Activated CD4-positive, alpha-beta T cell treated with anti-CD3 and anti-CD28 coated beads for 36 hours (primary cell): ENCODE measurements at regions of chr2 and their contacts with region 1.

Region 1: GRCh38 chr2:136384531-136385303 is 266.8 kb upstream of the CXCR4 start:
- DNase-seq: peak; percentile 68
- ATAC-seq: peak; percentile 40
- H3K4me3 Mint-ChIP-seq: no peak overlapping the region
- H3K27ac Mint-ChIP-seq: peak overlapping the region; percentile 67
- H3K4me1 Mint-ChIP-seq: peaks cover 42% of the 10 kb centered on the region
- H3K27me3 Mint-ChIP-seq: no peaks in the 10 kb centered on the region

Region 2: GRCh38 chr2:135531231-135532228 is 853.2 kb before region 1 on chr2 and contains the start of gene R3HDM1:
- CTCF ChIA-PET with region 1: no interaction called
- POLR2A ChIA-PET with region 1: no interaction called
- intact Hi-C with region 1: loop called in 1 of 2 experiments (anchors 2 kb)
- DNase-seq: peak; percentile 96
- ATAC-seq: peak; percentile 88
- H3K4me3 Mint-ChIP-seq: no peak within 1 kb of the TSS
- H3K27ac Mint-ChIP-seq: peak within 1 kb of the TSS; percentile 84
- H3K4me1 Mint-ChIP-seq: peaks cover 32% of the 10 kb centered on the region
- H3K27me3 Mint-ChIP-seq: no peaks in the 10 kb centered on the region
- total RNA-seq, gene R3HDM1: 62.6 to 100.0 TPM

Region 3: GRCh38 chr2:135870571-135870970 is 514.1 kb before region 1 on chr2:
- CTCF ChIA-PET with region 1: interaction called, 6 read pairs
- POLR2A ChIA-PET with region 1: interaction called, 11 read pairs
- intact Hi-C with region 1: loop called in 1 of 2 experiments (anchors 1 kb)
- DNase-seq: peak; percentile 38
- ATAC-seq: peak; percentile 80
- H3K4me3 Mint-ChIP-seq: no peak overlapping the region
- H3K27ac Mint-ChIP-seq: peak overlapping the region; percentile 40
- H3K4me1 Mint-ChIP-seq: peaks cover 56% of the 10 kb centered on the region
- H3K27me3 Mint-ChIP-seq: no peaks in the 10 kb centered on the region

Region 4: GRCh38 chr2:135985018-135985825 is 399.5 kb before region 1 on chr2 and contains the start of gene DARS1:
- CTCF ChIA-PET with region 1: interaction called, 6 read pairs
- POLR2A ChIA-PET with region 1: interaction called, 11 read pairs
- intact Hi-C with region 1: loop called (anchors 1 kb)
- DNase-seq: peak; percentile 92
- ATAC-seq: peak; percentile 82
- H3K4me3 Mint-ChIP-seq: peak within 1 kb of the TSS; percentile 93
- H3K27ac Mint-ChIP-seq: peak within 1 kb of the TSS; percentile 97
- H3K4me1 Mint-ChIP-seq: peaks cover 44% of the 10 kb centered on the region
- H3K27me3 Mint-ChIP-seq: no peaks in the 10 kb centered on the region
- total RNA-seq, gene DARS1: 174 to 190 TPM

Region 5: GRCh38 chr2:136135921-136136906 is 248.5 kb before region 1 on chr2:
- CTCF ChIA-PET with region 1: interaction called, 35 read pairs
- POLR2A ChIA-PET with region 1: interaction called, 15 read pairs
- intact Hi-C with region 1: loop called (anchors 1 kb)
- DNase-seq: peak; percentile 73
- ATAC-seq: peak; percentile 57
- H3K4me3 Mint-ChIP-seq: peak overlapping the region; percentile 20
- H3K27ac Mint-ChIP-seq: peak overlapping the region; percentile 78
- H3K4me1 Mint-ChIP-seq: peaks cover 91% of the 10 kb centered on the region
- H3K27me3 Mint-ChIP-seq: peaks cover 19% of the 10 kb centered on the region

Region 6: GRCh38 chr2:136305517-136306192 is 79.1 kb before region 1 on chr2:
- CTCF ChIA-PET with region 1: interaction called, 4 read pairs
- POLR2A ChIA-PET with region 1: interaction called, 9 read pairs
- intact Hi-C with region 1: loop called in 1 of 2 experiments (anchors 1 kb)
- DNase-seq: peak; percentile 84
- ATAC-seq: peak; percentile 99
- H3K4me3 Mint-ChIP-seq: no peak overlapping the region
- H3K27ac Mint-ChIP-seq: peak overlapping the region; percentile 88
- H3K4me1 Mint-ChIP-seq: peaks cover 33% of the 10 kb centered on the region
- H3K27me3 Mint-ChIP-seq: peaks cover 5% of the 10 kb centered on the region

Region 7: DNA sequence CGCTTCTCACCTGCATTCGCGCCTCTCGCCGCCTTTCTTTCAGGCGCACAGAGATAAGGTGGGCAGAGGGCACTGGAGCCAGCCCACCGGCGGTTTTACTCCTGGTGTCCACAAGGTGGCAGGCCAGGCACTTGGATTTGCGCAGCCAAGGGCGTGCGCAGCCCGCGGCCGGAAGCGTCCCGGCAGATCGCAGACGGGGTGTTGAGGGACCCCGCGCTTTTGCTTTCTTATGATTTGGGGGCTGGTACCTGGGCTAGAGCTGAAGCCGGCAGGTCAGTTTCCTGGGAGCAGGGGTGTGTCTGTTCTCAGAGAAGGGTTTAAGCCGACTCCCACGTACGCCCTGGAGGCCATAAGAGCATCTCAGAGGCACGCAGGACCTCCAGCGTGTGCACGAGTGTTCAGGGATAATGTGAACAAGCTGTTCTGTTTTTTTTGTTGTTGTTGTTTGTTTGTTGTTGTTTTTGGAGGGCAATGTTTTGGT is 38.8 kb after region 1 on chr2:
- CTCF ChIA-PET with region 1: interaction called, 16 read pairs
- POLR2A ChIA-PET with region 1: no interaction called
- intact Hi-C with region 1: no loop called
- DNase-seq: peak; percentile 93
- ATAC-seq: peak; percentile 98
- H3K4me3 Mint-ChIP-seq: peak overlapping the region; percentile 70
- H3K27ac Mint-ChIP-seq: peak overlapping the region; percentile 56
- H3K4me1 Mint-ChIP-seq: peaks cover 18% of the 10 kb centered on the region
- H3K27me3 Mint-ChIP-seq: peaks cover 43% of the 10 kb centered on the region